Activated CD4-positive, alpha-beta T cell treated with anti-CD3 and anti-CD28 coated beads, Interleukin-2, amount 10 ng/mL, durations not matched to agents 24 days and 14 days (primary cell): ENCODE measurements at regions of chr10 and their contacts with region 1.

Region 1: DNA sequence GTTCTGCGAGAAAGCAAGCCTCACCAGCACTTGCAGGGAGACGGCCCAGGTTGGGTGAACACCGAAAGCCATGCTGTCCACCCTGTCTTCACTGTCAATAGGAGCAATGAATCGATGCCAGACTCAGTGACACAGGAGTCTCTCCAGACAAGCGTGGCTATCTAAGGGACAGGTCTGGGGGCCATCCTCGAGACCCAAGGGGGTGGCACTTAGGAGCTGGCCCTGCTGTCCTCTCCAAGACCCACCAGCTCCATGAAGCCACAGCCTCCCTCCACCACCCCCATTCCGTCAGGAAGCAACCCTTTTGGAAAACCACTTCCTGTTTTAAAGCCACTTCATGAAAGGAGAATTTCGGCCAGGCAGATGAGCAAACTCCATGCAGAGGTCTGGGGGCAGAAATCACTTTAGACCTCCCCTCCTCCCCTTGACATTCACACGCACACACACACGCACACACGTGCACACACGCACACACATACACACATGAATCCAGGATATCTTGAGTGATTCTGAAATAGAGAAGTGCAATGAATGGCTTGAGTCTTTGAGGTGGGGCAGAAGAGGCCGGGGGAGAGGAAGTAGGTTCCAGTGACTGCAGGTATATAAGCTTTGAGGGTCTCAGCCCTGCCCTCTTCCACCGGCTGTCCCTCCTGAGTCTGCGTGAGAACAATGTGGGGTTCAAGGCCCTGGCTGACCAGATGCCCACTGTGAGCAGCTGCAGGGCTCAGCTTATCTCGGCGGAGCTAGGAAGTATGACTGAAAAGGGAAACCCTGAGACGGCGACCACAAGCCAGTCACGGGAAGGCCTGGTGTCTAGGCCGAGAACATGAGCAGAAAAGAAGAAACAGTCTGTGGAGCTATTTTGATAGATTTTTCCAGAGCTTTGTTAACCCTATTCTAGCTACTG is 25.0 kb downstream of the RGS10 start:
- DNase-seq: peak; percentile 87
- H3K4me3 Mint-ChIP-seq: peak overlapping the region; percentile 75
- H3K27ac Mint-ChIP-seq: peak overlapping the region; percentile 90
- H3K4me1 Mint-ChIP-seq: peaks cover 48% of the 10 kb centered on the region
- H3K27me3 Mint-ChIP-seq: no peaks in the 10 kb centered on the region

Region 2: GRCh38 chr10:119502209-119502608 is 15.3 kb before region 1 on chr10:
- intact Hi-C with region 1: loop called (anchors 2 kb)
- DNase-seq: peak; percentile 93
- H3K4me3 Mint-ChIP-seq: peak overlapping the region; percentile 72
- H3K27ac Mint-ChIP-seq: peak overlapping the region; percentile 97
- H3K4me1 Mint-ChIP-seq: peaks cover 73% of the 10 kb centered on the region
- H3K27me3 Mint-ChIP-seq: no peaks in the 10 kb centered on the region

Region 3: DNA sequence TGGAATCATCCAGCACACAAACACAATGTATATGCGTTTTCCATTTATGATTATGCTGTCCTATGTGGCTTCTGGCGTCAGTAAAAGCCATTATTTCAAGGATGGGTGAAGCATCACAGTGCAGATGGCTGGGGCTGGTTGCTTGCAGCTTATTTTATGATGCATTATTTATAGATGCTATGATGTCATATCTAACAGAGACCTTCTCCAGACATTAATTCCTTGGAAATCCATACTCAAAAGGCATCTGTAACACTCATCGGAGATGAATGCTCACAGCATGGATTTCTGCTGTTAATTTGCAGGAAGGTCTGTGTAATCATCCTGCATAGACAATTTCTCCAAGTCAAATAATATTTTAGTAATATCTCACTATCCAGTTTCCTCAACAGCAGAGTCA is 17.8 kb after region 1 on chr10:
- intact Hi-C with region 1: loop called (anchors 1 kb)
- DNase-seq: no peak
- H3K4me3 Mint-ChIP-seq: peak overlapping the region; percentile 27
- H3K27ac Mint-ChIP-seq: peak overlapping the region; percentile 66
- H3K4me1 Mint-ChIP-seq: peaks cover 67% of the 10 kb centered on the region
- H3K27me3 Mint-ChIP-seq: no peaks in the 10 kb centered on the region